ENCODE measurements at regions of chr20 and their contacts with region 1.

Region 1: DNA sequence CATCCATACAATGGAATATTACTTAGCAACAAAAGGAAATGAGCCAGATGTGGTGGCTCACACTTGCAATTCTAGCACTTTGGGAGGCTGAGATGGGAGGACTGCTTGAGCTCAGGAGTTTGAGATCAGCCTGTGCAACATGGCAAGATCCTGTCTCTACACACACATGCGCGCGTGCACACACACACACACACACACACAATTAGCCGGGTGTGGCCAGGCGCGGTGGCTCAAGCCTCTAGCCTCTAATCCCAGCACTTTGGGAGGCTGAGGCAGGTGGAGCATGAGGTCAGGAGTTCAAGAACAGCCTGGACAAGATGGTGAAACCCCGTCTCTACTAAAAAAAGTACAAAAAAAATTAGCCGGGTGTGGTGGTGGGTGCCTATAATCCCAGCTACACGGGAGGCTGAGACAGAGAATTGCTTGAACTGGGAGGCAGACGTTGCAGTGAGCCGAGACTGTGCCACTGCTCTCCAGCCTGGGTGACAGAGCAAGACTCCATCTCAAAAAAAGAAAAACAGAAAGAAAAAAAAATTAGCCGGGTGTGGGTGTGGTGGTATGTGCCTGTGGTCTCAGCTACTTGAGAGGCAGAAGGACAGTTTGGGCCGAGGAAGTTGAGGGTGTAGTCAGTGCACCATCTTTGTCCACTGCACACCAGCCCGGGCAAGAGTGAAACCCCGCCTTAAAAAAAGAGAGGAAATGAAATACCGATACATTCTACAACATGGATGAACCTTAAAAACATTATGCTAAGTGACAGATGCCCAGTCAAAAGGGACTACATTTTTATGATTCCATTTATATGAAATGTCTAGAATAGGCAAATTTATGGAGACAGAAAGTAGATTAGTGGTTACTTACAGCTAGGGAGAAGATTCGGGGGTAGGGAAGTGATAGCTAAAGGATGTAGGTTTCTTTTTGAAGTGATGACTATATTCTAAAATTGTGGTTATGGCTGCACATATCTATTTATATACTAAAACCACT is 52.5 kb downstream of the RBL1 start:
- DNase-seq: peak; percentile 45
- ATAC-seq: peak; percentile 82
- H3K4me3 Mint-ChIP-seq: peak overlapping the region; percentile 54
- H3K27ac Mint-ChIP-seq: peak overlapping the region; percentile 88
- H3K4me1 Mint-ChIP-seq: peaks cover 34% of the 10 kb centered on the region
- H3K27me3 Mint-ChIP-seq: no peaks in the 10 kb centered on the region

Region 2: GRCh38 chr20:37020636-37021035 is 22.6 kb before region 1 on chr20:
- CTCF ChIA-PET with region 1: interaction called, 3 read pairs
- POLR2A ChIA-PET with region 1: no interaction called
- intact Hi-C with region 1: loop called in 1 of 2 experiments (anchors 2 kb)
- DNase-seq: no peak
- ATAC-seq: no peak
- H3K4me3 Mint-ChIP-seq: no peak overlapping the region
- H3K27ac Mint-ChIP-seq: no peak overlapping the region
- H3K4me1 Mint-ChIP-seq: peaks cover 23% of the 10 kb centered on the region
- H3K27me3 Mint-ChIP-seq: no peaks in the 10 kb centered on the region